ENCODE measurements at regions of chr9 and their contacts with region 1.

Region 1: GRCh38 chr9:68704814-68705530 is at the start of gene PIP5K1B:
- DNase-seq: peak; percentile 92
- ATAC-seq: peak; percentile 92
- total RNA-seq, gene PIP5K1B: 60.6 TPM

Region 2: DNA sequence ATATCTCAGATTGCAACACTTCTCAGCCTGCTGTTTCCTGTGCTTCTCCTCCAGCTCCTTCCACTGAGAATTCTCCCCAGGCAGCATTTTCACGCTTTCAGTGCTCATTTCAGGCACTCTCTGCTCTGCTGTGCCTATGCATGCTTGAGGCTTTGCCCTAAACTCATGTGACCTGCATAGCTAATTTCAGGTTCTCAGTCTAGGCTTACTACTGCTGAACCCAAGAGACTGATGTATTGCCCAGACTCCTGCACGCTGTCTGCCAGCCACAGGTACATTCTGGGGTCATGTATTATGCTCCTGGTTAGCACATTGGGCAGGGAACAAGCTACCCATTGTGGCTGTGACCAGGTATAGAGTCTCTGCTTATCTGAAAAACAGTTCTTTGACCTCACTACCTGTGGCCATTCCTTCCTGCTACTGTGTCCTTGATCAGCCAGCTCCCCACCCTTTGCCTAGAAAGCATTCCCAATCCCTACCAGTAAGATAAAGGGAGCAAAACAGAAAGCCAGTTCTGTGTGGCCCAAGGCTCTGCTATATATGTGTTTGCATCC is 34.7 kb after region 1 on chr9:
- intact Hi-C with region 1: loop called (anchors 2 kb)
- DNase-seq: no peak
- ATAC-seq: peak; percentile 62

Region 3: GRCh38 chr9:68802525-68803015 is 97.6 kb after region 1 on chr9:
- intact Hi-C with region 1: loop called (anchors 10 kb)
- DNase-seq: no peak
- ATAC-seq: no peak

Region 4: DNA sequence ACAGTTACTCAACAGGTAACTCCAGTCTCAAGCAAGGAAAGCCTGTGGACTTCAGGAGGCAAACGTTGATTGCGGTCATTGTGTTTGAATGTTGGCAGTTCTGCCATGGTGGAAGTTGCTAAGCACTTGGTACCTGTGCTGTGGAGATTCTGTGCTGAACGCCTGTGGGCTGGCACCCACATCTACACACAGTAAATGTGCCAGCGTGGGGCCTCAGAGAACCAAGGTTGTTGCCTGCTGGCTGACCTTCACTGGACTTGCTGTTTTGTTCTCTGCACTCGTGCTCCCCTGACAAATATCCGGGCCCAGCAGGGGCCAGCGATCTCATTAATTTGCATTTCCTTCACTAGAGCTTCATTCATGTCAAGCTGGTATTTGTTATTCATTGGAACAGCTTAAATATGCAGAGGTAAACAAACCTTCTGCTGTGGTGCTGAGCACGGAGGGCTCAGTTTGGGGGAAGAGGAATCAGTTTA is 167.1 kb after region 1 on chr9:
- intact Hi-C with region 1: loop called (anchors 10 kb)
- DNase-seq: peak; percentile 73
- ATAC-seq: peak; percentile 95

Region 5: GRCh38 chr9:68925175-68925574 is 220.2 kb after region 1 on chr9:
- intact Hi-C with region 1: no loop called
- DNase-seq: no peak
- ATAC-seq: no peak

Region 6: DNA sequence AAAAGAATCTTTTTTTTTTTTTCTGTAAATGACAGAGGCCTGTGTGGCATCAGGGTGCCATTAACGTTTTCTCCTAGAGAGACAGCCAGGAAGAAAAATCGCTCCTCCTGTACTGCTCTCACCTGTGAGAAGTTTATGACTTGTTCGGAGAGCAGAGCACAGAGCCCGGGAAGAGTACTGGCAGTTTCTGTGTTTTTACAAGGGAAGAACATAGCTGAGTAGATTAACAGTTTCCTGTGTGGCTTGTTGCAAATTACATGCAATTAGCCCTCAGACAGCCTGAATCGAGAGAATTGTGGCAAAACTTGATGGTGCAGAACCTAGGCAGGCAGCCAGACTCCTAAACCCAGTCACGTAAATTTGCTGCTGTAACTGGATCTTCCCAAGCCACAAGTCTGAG is 276.8 kb after region 1 on chr9:
- intact Hi-C with region 1: loop called (anchors 5 kb)
- DNase-seq: no peak
- ATAC-seq: no peak

Region 7: DNA sequence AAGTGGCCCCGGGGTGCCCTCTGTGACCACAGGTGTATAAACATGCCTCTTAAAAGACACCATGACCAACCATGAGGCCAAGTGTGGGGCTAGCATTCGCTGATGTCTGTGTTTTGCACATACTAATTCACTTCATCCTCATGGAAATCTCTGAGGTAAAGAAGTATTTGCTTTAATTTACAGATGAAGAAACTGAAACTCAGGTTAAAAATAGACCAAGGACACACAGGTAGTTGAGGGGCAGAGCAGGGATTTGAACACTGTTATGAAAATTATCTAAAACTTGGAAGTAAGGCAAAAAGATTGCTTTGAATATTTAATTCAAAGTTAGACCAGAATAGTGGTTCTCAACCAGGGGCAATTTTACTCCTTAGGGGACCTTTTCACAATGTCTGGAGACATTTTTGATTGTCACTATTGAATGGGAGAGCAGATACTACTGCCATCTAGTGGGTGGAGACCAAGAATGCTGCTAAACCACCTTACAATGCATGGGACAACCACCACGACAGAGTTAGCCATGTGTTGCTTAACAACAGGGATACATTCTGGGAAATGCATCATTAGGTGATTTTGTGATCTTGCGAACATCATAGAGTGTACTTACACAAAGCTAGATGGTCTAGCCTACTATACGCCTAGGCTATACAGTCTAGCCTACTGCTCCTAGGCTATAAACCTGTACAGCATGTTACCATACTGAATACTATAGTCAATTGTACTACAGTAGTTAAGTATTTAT is 322.6 kb after region 1 on chr9:
- intact Hi-C with region 1: loop called (anchors 2 kb)
- DNase-seq: no peak
- ATAC-seq: peak; percentile 76

Measured in Right ventricle myocardium inferior (tissue), 1 donor.